Activated CD8-positive, alpha-beta memory T cell treated with anti-CD3 and anti-CD28 coated beads, Interleukin-2, amount 10 ng/mL, durations not matched to agents 7 days and 5 days (primary cell): ENCODE measurements at regions of chr14 and their contacts with region 1.

Region 1: GRCh38 chr14:20613094-20614037 is 22.2 kb upstream of the RNASE12 start:
- DNase-seq: peak; percentile 91
- ATAC-seq: peak; percentile 80
- H3K4me3 Mint-ChIP-seq: no peak overlapping the region
- H3K27ac Mint-ChIP-seq: no peak overlapping the region
- H3K4me1 Mint-ChIP-seq: peaks cover 24% of the 10 kb centered on the region
- H3K27me3 Mint-ChIP-seq: no peaks in the 10 kb centered on the region

Region 2: DNA sequence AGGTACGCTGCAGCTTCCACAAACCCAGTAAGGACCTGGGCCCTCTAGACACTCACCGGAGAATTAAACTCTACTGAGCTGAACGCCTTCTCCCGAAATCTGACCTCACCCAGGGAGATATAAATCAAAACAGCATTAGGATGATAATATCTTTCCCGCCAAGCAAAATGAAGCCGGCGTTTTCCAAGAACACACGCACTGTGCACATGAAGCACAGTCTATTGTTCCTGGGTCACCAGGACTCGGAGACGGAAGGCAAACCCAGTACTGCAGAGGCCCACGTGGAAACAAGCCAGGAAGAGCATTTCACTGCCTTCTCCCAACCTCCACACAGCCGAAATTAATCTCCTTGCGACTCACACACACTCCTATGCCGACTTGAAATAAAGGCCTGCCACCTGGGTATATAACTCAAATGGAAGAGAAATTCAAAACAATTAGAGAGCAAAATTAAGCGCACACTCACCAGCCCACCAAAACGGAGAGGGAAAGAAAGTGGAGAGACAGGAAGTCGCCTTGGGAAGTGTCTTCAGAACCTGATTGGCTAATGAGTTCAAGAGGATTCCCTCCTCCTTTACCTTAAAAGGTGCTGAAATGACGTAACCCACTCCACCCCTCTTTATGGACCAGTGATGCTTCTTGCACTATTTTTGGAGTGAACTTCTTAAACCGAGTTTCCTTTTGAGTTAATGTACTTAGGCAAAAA is 280.4 kb before region 1 on chr14 and contains the start of gene CCNB1IP1:
- CTCF ChIA-PET with region 1: interaction called, 89 read pairs
- DNase-seq: peak; percentile 74
- ATAC-seq: peak; percentile 99
- H3K4me3 Mint-ChIP-seq: peak within 1 kb of the TSS; percentile 93
- H3K27ac Mint-ChIP-seq: peak within 1 kb of the TSS; percentile 94
- H3K4me1 Mint-ChIP-seq: peaks cover 53% of the 10 kb centered on the region
- H3K27me3 Mint-ChIP-seq: no peaks in the 10 kb centered on the region
- total RNA-seq, gene CCNB1IP1: 39.0 to 39.5 TPM

Region 3: DNA sequence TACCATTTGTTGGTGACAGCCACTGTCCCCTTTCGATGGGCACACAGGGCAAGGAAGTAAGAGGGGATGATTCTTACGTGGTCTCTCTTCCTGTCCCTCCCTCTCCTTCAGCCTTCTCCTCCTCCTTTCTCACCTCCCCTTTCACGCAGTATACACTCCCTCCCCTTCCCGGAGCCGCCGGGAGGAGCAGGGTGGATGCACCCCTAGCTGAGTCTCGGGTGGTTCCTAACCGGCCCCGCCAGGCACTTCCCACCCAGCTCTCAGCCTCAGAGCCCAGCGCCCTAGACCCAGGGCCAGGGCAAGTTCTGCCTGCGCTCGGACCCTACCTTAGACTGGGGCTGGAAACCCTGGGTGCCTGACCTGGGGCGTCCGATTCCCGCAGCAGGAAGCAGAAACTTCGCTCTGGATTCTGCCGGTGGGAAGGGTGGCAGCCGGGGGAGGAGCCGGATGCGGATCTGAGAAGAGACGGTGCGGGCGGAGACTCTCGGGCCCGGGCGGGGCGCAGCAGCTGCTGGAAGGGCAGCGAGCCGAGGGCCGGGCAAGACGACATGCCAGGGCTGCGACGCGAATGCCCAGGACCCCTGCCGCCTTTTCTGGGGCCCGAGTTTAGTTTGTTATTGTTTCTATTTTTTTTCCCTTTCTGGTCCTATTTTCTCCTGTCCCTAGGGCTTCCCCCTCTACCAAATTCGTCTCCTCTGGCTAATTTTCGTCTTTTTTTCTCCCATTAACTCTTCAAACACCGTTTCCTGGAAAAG is 200.1 kb before region 1 on chr14 and contains the start of gene TEP1:
- CTCF ChIA-PET with region 1: interaction called, 48 read pairs
- DNase-seq: peak; percentile 86
- ATAC-seq: peak; percentile 93
- H3K4me3 Mint-ChIP-seq: peak within 1 kb of the TSS; percentile 94
- H3K27ac Mint-ChIP-seq: peak within 1 kb of the TSS; percentile 97
- H3K4me1 Mint-ChIP-seq: peaks cover 37% of the 10 kb centered on the region
- H3K27me3 Mint-ChIP-seq: no peaks in the 10 kb centered on the region
- total RNA-seq, gene TEP1: 44.9 to 52.9 TPM

Region 4: GRCh38 chr14:20516906-20517305 is 96.5 kb before region 1 on chr14:
- CTCF ChIA-PET with region 1: no interaction called
- DNase-seq: no peak
- ATAC-seq: no peak
- H3K4me3 Mint-ChIP-seq: no peak overlapping the region
- H3K27ac Mint-ChIP-seq: no peak overlapping the region
- H3K4me1 Mint-ChIP-seq: no peaks in the 10 kb centered on the region
- H3K27me3 Mint-ChIP-seq: no peaks in the 10 kb centered on the region

Region 5: DNA sequence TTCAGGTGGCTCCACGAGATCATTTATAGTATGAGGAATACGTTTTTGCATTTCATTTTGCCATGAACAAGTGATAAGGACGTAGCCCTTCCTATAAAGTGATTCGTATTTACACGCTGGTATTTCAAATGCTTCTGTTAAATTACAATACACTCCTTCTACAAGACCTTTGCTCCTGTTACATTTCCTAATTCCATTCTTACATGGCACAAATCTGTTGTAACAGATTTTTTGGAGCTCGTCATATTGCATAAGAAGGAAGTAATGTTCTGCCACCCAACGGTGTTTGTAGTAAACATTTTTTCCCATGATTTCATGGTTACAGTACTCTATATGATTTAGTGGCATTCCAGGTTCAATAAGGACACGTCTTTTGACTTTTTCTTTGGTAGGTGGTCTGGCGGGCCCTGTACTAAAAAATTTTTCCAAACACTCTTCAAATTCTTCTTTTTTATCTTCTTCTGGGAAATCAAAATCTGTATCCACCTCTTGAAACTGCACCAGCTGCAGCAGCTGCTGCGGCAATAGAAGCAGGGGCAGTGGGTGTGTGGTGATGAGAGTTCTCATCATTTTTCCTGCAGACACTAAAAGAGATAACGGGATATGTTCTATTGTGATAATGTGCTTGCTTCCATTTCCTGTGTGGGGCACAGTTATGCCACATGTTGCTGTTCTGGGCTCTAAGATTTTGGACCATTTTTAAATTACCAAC is 56.7 kb before region 1 on chr14:
- CTCF ChIA-PET with region 1: no interaction called
- DNase-seq: no peak
- ATAC-seq: no peak
- H3K4me3 Mint-ChIP-seq: no peak overlapping the region
- H3K27ac Mint-ChIP-seq: no peak overlapping the region
- H3K4me1 Mint-ChIP-seq: no peaks in the 10 kb centered on the region
- H3K27me3 Mint-ChIP-seq: peaks cover 6% of the 10 kb centered on the region

Region 6: DNA sequence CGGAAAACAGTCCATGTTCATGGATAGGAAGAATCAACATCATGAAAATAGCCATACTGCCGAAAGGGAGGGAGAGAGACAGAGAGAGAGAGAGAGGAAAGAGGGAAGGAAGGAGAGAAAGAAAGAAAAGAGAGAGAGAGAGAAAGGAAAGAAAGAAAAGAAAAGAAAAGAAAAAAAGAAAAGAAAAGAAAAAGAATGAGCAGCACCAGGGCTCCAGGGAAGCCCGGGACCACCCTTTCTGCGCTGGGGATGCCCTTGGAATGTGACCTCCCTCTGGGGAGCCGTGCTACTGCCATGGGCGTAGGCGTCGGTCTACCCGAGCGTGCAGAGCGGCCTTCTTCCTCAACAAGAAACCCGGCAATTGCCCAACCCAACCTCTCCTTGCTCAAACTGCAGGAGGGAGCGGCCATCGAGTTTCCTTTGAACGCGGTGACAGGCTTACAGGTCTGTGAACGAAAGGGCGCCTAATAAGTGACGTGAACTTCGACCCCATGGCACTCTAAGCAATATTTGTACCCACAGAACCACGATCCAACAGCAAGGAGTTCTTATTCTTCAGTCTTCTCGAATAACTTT is 11.2 kb after region 1 on chr14:
- CTCF ChIA-PET with region 1: interaction called, 16 read pairs
- DNase-seq: peak; percentile 75
- ATAC-seq: peak; percentile 65
- H3K4me3 Mint-ChIP-seq: peak overlapping the region; percentile 64
- H3K27ac Mint-ChIP-seq: peak overlapping the region; percentile 67
- H3K4me1 Mint-ChIP-seq: peaks cover 58% of the 10 kb centered on the region
- H3K27me3 Mint-ChIP-seq: peaks cover 58% of the 10 kb centered on the region

Region 7: DNA sequence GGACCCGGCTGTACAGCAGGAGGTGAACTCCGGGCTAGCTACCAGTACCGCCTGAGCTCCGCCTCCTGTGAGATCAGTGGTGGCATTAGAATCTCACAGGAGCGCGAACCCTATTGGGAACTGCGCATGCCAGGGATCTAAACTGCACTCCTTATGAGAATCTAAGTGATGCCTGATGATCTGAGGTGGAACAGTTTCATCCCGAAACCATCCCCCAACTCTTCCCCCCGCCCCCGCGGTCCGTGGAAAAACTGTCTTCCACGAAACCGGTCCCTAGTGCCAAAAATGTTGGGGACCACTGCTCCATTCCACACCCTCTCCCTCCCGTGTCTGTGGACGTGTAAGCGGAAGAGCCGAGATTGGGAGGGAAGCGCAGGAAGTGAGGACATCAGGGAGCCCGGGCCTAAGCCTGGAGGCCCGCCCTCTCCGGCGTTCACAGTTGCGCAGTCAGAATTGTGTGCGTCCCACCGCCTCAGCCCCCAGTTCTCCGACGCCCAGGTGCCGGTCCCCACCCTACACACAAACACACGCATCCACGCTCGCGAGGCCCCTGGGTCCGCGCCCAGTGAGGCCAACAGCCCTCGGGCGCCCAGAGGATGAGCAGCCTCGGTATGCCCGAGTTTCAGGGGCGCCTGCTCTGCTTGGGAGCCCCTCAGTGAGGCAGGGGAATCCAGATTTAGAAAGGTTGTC is 69.2 kb after region 1 on chr14:
- CTCF ChIA-PET with region 1: interaction called, 36 read pairs
- DNase-seq: peak; percentile 86
- ATAC-seq: peak; percentile 63
- H3K4me3 Mint-ChIP-seq: no peak overlapping the region
- H3K27ac Mint-ChIP-seq: no peak overlapping the region
- H3K4me1 Mint-ChIP-seq: peaks cover 12% of the 10 kb centered on the region
- H3K27me3 Mint-ChIP-seq: no peaks in the 10 kb centered on the region

Region 8: DNA sequence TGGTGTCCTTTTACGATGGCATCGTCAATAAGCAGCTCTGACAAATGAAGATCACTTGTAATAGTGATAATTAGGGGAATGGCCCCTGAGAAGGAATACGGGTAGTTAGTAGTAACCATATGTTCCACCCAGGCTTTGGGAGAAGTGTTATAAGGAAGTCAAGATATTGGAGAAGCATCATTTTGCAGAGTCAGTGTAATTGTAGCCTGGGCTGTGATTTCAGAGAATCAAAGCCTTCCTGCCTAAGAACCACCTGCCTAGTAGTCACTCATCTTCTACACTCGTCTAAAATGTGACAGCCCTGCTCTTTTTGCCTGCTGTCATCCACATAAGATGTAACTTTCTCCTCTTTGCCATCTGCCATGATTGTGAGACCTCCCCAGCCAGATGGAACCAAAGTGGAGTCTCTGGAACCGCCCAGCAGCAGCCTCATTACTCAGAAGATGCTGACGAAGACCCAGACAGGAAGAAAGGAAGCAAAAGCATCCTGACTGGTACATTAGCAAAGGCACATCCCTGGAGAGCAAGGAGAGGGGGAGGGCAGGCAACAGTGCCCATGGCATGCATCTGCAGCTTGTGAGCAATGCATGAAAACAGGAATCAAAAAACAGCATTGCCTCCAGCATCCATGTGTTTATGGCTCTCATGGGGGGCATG is 119.7 kb after region 1 on chr14:
- CTCF ChIA-PET with region 1: no interaction called
- DNase-seq: no peak
- ATAC-seq: no peak
- H3K4me3 Mint-ChIP-seq: no peak overlapping the region
- H3K27ac Mint-ChIP-seq: no peak overlapping the region
- H3K4me1 Mint-ChIP-seq: no peaks in the 10 kb centered on the region
- H3K27me3 Mint-ChIP-seq: peaks cover 10% of the 10 kb centered on the region

Region 9: GRCh38 chr14:20743256-20743959 is 130.0 kb after region 1 on chr14:
- CTCF ChIA-PET with region 1: no interaction called
- DNase-seq: no peak
- ATAC-seq: no peak
- H3K4me3 Mint-ChIP-seq: no peak overlapping the region
- H3K27ac Mint-ChIP-seq: no peak overlapping the region
- H3K4me1 Mint-ChIP-seq: no peaks in the 10 kb centered on the region
- H3K27me3 Mint-ChIP-seq: peaks cover 16% of the 10 kb centered on the region